ENCODE measurements at regions of chr18 and their contacts with region 1.

Region 1: DNA sequence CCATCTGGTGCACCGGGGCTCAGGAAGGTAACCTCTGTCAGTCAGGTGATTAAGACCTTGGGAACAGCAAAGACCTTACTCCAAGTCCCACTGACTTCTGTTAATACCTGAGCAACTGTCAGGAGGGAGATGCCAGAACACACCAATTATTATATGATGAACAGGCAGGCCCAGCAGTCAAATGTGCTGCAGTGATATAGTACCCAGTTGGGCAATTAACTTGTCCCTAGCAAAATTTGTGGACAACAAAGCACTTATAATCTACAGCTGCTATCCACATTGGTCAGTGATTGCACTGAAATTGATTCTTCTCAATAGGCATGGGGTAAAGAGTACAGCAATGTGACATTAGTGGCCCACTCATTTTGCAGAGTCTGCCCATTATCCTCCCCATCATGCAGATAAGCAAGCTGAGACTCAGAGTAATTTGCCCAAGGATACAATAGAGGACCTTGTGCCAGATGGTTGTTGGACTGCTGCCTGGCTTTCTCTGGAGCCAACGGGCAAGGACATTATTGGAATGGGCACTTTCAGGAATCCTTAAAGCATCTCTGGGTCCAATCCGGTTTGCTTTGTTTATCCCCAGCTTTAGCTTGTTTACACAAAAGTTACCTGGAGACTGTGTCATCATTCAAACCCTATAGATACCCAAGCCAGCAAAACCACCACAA is 147.6 kb downstream of the CCBE1 start:
- DNase-seq: no peak

Region 2: DNA sequence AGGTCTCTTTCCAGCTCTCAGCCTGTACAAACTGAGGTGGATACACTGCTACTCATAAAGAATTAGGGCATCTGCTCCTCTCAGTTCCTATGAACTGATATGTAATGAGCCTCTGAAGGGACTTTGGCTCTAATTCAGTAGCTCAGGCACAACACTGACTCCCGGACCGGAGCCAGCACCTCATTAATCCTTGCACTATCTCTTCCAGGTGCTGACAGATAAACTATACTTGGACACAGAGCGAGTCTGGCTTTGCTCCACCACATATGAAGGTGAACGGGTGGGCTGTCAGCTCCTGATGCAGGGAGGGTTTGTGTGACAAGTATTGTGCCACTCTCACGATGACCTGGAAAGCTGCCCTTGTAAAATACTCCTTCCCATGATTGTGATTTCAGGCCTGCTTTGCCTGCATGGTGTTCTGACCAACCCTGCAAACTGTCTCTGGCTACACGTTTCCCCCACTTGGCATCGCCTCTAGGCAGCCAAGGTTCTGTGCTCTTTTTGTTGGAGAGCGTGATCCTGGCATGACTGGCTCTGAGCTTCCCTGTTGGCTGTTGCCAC is 79.0 kb before region 1 on chr18:
- intact Hi-C with region 1: loop called (anchors 1 kb)
- DNase-seq: no peak

Region 3: DNA sequence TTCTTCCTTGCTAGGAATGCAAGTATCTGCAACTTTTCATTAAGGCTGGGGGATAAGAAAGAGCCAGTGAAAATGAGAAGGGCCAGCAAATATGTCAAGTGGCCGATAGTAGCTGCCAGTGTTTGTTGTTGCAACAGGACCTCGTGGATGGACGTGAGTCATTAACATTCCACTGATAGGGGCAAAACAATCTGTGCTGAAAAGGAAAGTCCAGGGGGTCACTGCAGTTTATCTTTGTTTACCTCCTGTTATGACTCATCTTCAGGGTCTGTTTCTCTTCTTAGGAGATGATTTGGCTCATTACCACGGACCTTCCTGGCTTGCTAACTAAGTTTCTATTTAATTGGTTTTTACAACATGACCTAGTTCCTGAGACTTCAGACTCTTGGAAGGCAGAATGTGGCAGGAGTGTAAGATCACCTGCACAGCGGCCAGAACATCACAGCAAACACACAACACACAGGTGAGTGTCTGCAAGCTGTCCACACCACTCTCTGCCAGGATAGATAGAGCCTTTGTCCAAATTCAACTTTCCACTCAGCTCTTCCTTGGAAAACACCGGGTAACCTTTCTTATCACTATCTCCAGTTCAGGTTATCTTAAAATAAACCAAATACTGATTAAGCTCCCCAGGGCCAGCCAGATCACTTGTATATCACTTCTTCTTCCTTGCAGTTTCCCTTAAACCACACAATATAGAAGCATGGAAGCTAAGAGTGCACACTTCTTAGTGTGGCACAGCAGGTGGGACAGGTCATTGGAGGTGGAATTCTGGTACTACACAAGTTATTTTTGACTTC is 33.1 kb before region 1 on chr18:
- intact Hi-C with region 1: loop called (anchors 2 kb)
- DNase-seq: no peak

Region 4: DNA sequence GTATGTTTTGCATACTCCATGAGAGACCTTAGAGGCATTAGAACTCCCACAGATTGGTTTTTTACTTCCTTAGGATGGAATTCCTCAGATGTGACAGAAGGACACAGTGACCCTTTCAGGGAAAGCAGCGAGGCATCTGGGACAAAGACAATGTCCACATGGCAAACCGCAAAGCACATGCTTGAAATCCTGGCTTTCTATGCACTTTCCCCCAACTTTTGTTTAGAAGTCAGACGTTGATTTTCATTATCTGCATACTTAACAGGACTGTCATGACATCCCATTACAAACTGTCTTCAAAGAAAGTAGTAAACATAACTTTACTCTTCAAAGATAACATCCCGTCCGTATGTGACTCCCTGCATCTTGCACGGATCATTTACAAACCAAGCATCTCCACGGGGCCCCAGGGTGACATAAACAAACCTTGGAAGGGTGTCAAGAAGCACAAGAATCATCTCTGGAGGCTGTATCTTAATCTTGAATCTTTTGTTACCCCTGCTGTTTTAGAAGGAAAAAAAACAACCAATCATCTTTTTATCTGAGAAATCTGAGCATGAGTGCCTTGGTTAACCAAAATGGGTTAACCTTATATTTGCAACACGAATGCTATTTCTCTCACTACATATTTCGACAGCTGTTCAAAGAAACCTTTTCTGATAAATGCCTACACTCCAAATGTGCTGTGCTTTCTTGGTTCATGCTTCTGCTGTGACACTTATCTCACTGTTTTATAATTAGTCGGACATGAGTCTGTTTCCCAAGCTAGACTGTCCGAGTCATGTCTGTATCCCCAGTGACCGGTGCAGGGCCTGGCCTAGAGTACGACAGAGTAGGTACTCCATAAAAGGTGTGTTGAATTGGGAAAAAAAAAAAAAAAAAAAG is 56.8 kb after region 1 on chr18:
- intact Hi-C with region 1: loop called (anchors 5 kb)
- DNase-seq: no peak

Region 5: DNA sequence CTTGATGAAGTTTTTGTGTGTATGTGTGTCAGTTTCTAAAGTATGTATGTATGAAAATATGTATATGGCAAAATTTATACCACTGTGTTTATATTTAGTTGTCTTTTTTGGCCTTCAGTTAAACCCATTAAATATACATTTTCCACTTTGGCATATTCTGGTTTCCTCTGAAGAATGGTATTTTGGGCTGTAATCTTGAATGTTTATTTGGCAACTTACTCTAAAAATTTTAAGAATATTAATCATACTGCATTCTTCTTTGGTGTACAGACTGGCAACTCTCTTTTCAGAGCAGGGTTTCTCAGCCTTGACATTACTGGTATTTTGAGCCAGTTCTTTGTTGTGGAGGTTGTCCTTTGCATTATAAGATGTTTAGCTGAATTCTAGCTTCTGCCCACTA is 175.5 kb after region 1 on chr18:
- intact Hi-C with region 1: no loop called
- DNase-seq: no peak

Measured in cardiac septum (tissue), 1 donor.